Activated CD4-positive, alpha-beta memory T cell treated with anti-CD3 and anti-CD28 coated beads, Interleukin-2, amount 10 ng/mL, durations not matched to agents 7 days and 5 days (primary cell): ENCODE measurements at regions of chr22 and their contacts with region 1.

Region 1: DNA sequence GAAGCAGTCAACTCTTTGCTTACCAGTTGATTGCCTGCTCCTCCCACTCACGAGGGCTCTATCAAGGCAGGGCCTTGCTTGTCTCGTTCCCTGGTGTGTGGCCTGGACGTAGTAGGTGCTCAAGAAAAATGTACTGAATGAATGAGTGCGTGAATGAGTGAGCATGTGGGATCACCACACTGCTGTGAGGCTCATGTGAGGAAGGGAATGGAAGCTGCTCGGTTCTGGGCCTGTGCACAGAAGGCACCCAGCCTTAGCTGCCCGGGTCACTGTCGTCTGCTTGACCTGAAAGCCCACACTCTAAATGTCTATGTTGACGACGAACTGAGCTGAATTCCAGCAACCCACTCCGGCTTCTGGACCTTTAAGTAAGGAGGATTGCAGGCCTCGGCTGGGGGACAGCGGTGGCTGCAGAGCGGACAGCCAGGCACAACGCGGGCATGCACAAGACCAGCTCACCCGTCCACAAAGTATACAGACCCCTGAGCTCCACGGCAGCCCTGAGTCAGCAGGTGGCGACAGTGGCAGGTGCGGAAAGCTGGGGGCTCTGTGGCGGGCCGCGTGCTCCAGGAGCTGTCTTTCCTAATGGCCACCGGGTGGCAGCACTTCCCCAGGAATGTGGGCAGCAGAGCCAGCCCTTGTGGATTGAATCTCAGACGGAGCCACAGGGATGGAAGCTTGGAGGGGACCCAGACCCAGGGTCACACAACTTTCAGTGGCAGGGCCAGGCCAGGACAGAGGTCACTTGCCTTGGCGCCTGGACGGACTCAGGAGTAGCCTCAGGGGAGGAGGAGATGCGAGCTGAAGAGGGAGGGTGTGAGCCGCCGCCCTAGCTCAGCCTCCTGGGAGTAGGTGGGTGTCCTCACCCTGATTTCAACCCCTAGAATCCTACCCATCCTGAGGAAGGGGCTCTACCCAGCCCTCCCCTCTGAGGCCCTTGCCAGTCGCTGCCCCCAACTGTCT is 5.0 kb upstream of the PICK1 start:
- DNase-seq: peak; percentile 80
- H3K4me3 Mint-ChIP-seq: no peak overlapping the region
- H3K27ac Mint-ChIP-seq: no peak overlapping the region
- H3K4me1 Mint-ChIP-seq: peaks cover 12% of the 10 kb centered on the region
- H3K27me3 Mint-ChIP-seq: peaks cover 2% of the 10 kb centered on the region

Region 2: GRCh38 chr22:37561212-37562048 is 490.8 kb before region 1 on chr22:
- CTCF ChIA-PET with region 1: no interaction called
- POLR2A ChIA-PET with region 1: no interaction called
- DNase-seq: peak; percentile 80
- H3K4me3 Mint-ChIP-seq: peak overlapping the region; percentile 35
- H3K27ac Mint-ChIP-seq: no peak overlapping the region
- H3K4me1 Mint-ChIP-seq: peaks cover 32% of the 10 kb centered on the region
- H3K27me3 Mint-ChIP-seq: peaks cover 67% of the 10 kb centered on the region

Region 3: GRCh38 chr22:38080850-38081635 is 28.9 kb after region 1 on chr22:
- CTCF ChIA-PET with region 1: no interaction called
- POLR2A ChIA-PET with region 1: no interaction called
- DNase-seq: no peak
- H3K4me3 Mint-ChIP-seq: no peak overlapping the region
- H3K27ac Mint-ChIP-seq: no peak overlapping the region
- H3K4me1 Mint-ChIP-seq: peaks cover 2% of the 10 kb centered on the region
- H3K27me3 Mint-ChIP-seq: peaks cover 25% of the 10 kb centered on the region

Region 4: DNA sequence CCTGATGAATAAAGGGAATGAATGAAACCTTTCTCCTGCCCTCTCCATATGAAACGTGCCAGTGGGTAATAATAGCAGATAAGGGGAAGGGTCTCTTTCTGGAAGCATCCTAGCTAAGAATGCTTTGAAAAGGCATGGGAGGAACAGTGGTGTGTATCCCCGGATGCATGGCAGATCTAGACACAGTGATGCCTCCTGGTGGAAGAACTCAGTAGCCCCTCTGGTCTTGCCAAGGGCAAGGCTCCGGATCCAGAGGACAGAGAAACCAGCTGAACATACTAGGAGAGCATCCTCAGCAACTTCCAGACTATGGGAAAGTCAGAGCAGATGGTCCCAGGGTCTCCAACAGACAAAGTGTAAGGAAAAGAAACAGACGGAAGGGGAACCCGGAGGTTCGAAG is 51.9 kb after region 1 on chr22:
- CTCF ChIA-PET with region 1: interaction called, 11 read pairs
- POLR2A ChIA-PET with region 1: no interaction called
- DNase-seq: no peak
- H3K4me3 Mint-ChIP-seq: no peak overlapping the region
- H3K27ac Mint-ChIP-seq: no peak overlapping the region
- H3K4me1 Mint-ChIP-seq: peaks cover 14% of the 10 kb centered on the region
- H3K27me3 Mint-ChIP-seq: no peaks in the 10 kb centered on the region

Region 5: GRCh38 chr22:38167988-38168431 is 115.8 kb after region 1 on chr22:
- CTCF ChIA-PET with region 1: no interaction called
- POLR2A ChIA-PET with region 1: no interaction called
- DNase-seq: no peak
- H3K4me3 Mint-ChIP-seq: no peak overlapping the region
- H3K27ac Mint-ChIP-seq: no peak overlapping the region
- H3K4me1 Mint-ChIP-seq: peaks cover 19% of the 10 kb centered on the region
- H3K27me3 Mint-ChIP-seq: no peaks in the 10 kb centered on the region

Region 6: DNA sequence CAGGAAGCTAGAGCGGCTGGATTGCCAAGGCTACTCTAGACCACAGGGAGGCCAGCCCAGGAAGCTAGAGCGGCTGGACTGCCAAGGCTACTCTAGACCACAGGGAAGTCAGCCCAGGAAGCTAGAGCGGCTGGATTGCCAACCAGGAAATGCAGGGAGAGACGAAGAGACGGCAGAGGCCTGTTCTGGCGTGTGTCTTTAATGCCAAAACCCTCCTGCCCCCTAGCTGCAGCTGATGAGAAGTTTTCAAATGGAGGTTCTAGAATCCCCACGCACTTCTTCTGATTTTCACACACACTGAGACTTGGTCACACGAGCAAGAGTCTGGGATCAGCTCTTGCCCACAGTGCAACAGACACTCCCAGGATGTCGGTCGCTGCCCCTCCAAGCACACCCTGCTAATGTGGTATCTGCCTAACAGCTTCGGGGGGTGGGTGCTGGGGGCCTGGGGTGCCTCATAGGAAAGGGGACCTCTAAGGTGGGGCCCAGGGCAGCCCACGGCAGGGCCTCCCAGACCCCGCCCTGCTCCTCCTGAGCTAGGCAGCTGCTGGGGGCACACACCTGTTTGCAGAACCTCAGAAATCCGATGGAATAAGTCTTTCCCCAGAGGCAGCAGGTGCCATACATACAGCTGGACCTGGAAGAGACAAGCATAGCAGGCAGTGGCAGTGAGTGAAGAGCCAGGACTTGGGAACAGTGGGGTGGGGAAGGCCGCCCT is 178.1 kb after region 1 on chr22:
- CTCF ChIA-PET with region 1: interaction called, 18 read pairs
- POLR2A ChIA-PET with region 1: no interaction called
- DNase-seq: peak; percentile 66
- H3K4me3 Mint-ChIP-seq: no peak overlapping the region
- H3K27ac Mint-ChIP-seq: peak overlapping the region; percentile 58
- H3K4me1 Mint-ChIP-seq: peaks cover 22% of the 10 kb centered on the region
- H3K27me3 Mint-ChIP-seq: no peaks in the 10 kb centered on the region

Region 7: DNA sequence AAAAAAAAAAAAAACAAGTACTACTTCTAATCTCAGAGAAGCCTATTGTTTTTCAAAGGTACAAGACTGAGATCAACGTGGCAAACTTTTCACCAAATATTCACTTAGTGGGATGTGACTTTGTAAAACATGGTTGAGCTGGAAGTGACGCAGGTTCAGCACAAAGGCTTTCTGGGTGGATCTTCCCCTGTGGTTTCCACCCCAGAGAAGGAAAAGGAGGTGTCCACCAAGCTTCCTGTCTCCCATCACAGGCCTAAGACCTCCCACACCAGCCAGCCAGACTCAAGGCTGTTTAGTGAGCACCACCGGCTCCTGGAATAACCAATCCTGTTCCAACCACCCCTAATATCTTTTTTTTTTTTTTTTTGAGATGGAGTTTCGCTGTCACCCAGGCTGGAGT is 214.9 kb after region 1 on chr22:
- CTCF ChIA-PET with region 1: interaction called, 10 read pairs
- POLR2A ChIA-PET with region 1: no interaction called
- DNase-seq: peak; percentile 77
- H3K4me3 Mint-ChIP-seq: peak overlapping the region; percentile 35
- H3K27ac Mint-ChIP-seq: peak overlapping the region; percentile 72
- H3K4me1 Mint-ChIP-seq: peaks cover 72% of the 10 kb centered on the region
- H3K27me3 Mint-ChIP-seq: no peaks in the 10 kb centered on the region

Region 8: DNA sequence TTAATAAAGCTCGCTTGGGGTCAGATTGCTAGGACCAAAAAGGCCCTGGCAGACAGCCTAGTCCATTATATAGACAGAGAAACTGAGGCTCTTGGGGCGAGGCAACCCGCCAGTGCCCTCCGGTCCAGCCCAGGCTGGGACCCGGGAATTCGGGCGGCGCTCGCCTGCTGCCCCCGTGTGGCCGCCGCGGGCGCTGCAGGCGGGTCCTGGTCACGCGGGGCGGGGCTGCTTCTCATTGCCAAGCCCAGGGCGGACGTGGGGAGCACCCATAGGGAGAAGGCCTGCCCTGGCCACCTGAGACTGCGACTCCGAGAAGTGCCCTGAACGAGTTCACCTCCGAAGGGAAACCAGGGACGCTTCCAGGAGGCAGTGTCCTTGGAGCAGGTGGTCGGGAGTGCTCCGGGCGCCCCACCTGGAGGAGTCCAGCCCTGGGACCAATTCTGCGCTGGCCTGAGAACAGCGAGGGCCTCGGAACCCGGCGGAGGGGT is 301.0 kb after region 1 on chr22:
- CTCF ChIA-PET with region 1: interaction called, 13 read pairs
- POLR2A ChIA-PET with region 1: no interaction called
- DNase-seq: peak; percentile 71
- H3K4me3 Mint-ChIP-seq: no peak overlapping the region
- H3K27ac Mint-ChIP-seq: no peak overlapping the region
- H3K4me1 Mint-ChIP-seq: no peaks in the 10 kb centered on the region
- H3K27me3 Mint-ChIP-seq: no peaks in the 10 kb centered on the region

Region 9: GRCh38 chr22:38569972-38570778 is 518.0 kb after region 1 on chr22 and contains the start of gene DMC1:
- CTCF ChIA-PET with region 1: interaction called, 29 read pairs
- POLR2A ChIA-PET with region 1: interaction called, 5 read pairs
- DNase-seq: peak; percentile 98
- H3K4me3 Mint-ChIP-seq: peak within 1 kb of the TSS; percentile 89
- H3K27ac Mint-ChIP-seq: peak within 1 kb of the TSS; percentile 93
- H3K4me1 Mint-ChIP-seq: peaks cover 23% of the 10 kb centered on the region
- H3K27me3 Mint-ChIP-seq: peaks cover 2% of the 10 kb centered on the region
- total RNA-seq, gene DMC1: 12.5 to 12.6 TPM